OCI-LY7 (cell line): ENCODE measurements at regions of chr14 and their contacts with region 1.

Region 1: DNA sequence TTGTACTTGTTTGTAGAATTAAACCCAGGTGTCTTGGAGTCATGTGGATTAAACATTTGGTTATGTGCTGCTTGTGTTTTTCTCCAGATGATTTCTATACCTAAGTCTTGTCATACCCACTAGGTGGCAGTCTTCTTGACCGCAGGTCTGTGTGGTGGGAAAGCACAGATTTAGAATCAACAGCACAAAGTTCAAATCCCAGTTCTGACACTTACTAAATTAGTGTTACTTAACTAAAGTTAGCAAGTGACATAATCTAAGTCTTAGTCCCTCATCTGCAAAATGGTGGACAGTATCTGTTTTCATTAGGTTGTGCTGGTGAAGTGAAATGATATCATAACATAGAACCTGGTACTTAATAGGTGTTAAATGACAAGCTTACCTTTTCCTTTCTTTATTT is 151.0 kb upstream of the ARHGAP5 start:
- DNase-seq: peak; percentile 65
- H3K4me3 ChIP-seq: no peak overlapping the region
- H3K27ac ChIP-seq: no peak overlapping the region
- H3K4me1 ChIP-seq: no peaks in the 10 kb centered on the region
- CTCF ChIP-seq: peak; percentile 91

Region 2: GRCh38 chr14:31510222-31510621 is 415.9 kb before region 1 on chr14:
- CTCF ChIA-PET with region 1: no interaction called
- POLR2A ChIA-PET with region 1: no interaction called
- intact Hi-C with region 1: loop called (anchors 10 kb)
- DNase-seq: peak; percentile 39
- H3K4me3 ChIP-seq: no peak overlapping the region
- H3K27ac ChIP-seq: no peak overlapping the region
- H3K4me1 ChIP-seq: no peaks in the 10 kb centered on the region
- CTCF ChIP-seq: peak; percentile 87

Region 3: DNA sequence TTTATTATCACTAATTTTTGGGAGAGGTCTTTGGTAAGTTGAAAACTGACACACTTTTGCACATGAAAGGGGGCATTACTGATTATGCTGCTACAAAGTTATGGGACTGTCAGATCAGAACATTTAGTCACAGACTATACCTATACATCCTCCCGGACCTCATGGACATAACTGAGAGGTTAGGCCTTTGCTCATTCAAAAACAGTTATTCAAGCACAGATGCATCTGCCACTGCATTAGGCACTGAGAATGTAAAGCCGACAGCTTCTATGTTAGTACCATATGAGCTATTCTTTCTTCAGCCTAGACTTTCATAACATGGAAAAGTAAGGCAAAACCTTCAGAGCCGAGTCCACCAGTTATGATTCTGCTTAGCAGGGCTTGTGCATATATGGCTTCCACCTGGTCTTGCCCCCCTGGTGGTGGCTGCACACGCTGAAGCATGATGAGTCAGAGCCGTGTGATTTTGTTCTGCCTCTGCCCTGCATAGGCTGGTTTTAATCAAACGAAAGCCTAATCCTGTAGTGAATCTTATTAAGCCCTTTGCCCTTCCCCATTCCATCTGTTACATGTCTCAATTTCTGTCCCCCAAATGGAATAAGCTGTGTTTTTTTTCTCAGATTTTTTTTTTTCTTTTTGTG is 298.7 kb after region 1 on chr14:
- CTCF ChIA-PET with region 1: no interaction called
- POLR2A ChIA-PET with region 1: no interaction called
- intact Hi-C with region 1: no loop called
- DNase-seq: no peak
- H3K4me3 ChIP-seq: no peak overlapping the region
- H3K27ac ChIP-seq: no peak overlapping the region
- H3K4me1 ChIP-seq: no peaks in the 10 kb centered on the region
- CTCF ChIP-seq: no peak

Region 4: GRCh38 chr14:32469388-32470160 is 543.5 kb after region 1 on chr14:
- CTCF ChIA-PET with region 1: no interaction called
- POLR2A ChIA-PET with region 1: no interaction called
- intact Hi-C with region 1: loop called (anchors 10 kb)
- DNase-seq: peak; percentile 31
- H3K4me3 ChIP-seq: no peak overlapping the region
- H3K27ac ChIP-seq: no peak overlapping the region
- H3K4me1 ChIP-seq: no peaks in the 10 kb centered on the region
- CTCF ChIP-seq: peak; percentile 78